ENCODE measurements at regions of chr1 and their contacts with region 1.

Region 1: GRCh38 chr1:156480411-156481192 is 20.0 kb downstream of the MEF2D start:
- DNase-seq: peak; percentile 55 to 89 (median 85)
- ATAC-seq: peak; percentile 87
- H3K4me3 ChIP-seq: no peak overlapping the region
- H3K4me3 Mint-ChIP-seq: no peak overlapping the region
- H3K27ac ChIP-seq: peak overlapping the region; percentile 22 to 52
- H3K27ac Mint-ChIP-seq: peak overlapping the region; percentile 89
- H3K4me1 ChIP-seq: peaks cover 22% of the 10 kb centered on the region
- H3K4me1 Mint-ChIP-seq: peaks cover 47% of the 10 kb centered on the region
- H3K27me3 ChIP-seq: no peaks in the 10 kb centered on the region
- H3K27me3 Mint-ChIP-seq: no peaks in the 10 kb centered on the region
- CTCF ChIP-seq: peak; percentile 79

Region 2: GRCh38 chr1:156082309-156083091 is 398.1 kb before region 1 on chr1 and contains the start of gene MEX3A:
- CTCF ChIA-PET with region 1: no interaction called
- POLR2A ChIA-PET with region 1: no interaction called
- intact Hi-C with region 1: no loop called
- DNase-seq: peak in 8 of 9 experiments; percentile 39 to 73 (median 64)
- ATAC-seq: peak; percentile 90
- H3K4me3 ChIP-seq: peak within 1 kb of the TSS; percentile 65 to 88
- H3K4me3 Mint-ChIP-seq: peak within 1 kb of the TSS; percentile 87
- H3K27ac ChIP-seq: no peak within 1 kb of the TSS
- H3K27ac Mint-ChIP-seq: no peak within 1 kb of the TSS
- H3K4me1 ChIP-seq: peaks cover 13% of the 10 kb centered on the region
- H3K4me1 Mint-ChIP-seq: peaks cover 7% of the 10 kb centered on the region
- H3K27me3 ChIP-seq: peaks cover 3 to 25% of the 10 kb centered on the region in 2 experiments
- H3K27me3 Mint-ChIP-seq: peaks cover 29% of the 10 kb centered on the region
- CTCF ChIP-seq: no peak
- total RNA-seq, gene MEX3A: 0.14 to 0.22 TPM

Region 3: GRCh38 chr1:156407344-156407743 is 73.3 kb before region 1 on chr1:
- CTCF ChIA-PET with region 1: no interaction called
- POLR2A ChIA-PET with region 1: no interaction called
- intact Hi-C with region 1: no loop called
- DNase-seq: no peak
- ATAC-seq: no peak
- H3K4me3 ChIP-seq: no peak overlapping the region
- H3K4me3 Mint-ChIP-seq: no peak overlapping the region
- H3K27ac ChIP-seq: no peak overlapping the region
- H3K27ac Mint-ChIP-seq: no peak overlapping the region
- H3K4me1 ChIP-seq: no peaks in the 10 kb centered on the region
- H3K4me1 Mint-ChIP-seq: no peaks in the 10 kb centered on the region
- H3K27me3 ChIP-seq: peaks cover 0 to 3% of the 10 kb centered on the region in 2 experiments
- H3K27me3 Mint-ChIP-seq: peaks cover 53% of the 10 kb centered on the region
- CTCF ChIP-seq: no peak

Region 4: GRCh38 chr1:156465747-156466365 is 14.7 kb before region 1 on chr1:
- CTCF ChIA-PET with region 1: interaction called, 11 read pairs
- POLR2A ChIA-PET with region 1: interaction called, 3 read pairs
- intact Hi-C with region 1: no loop called
- DNase-seq: no peak
- ATAC-seq: no peak
- H3K4me3 ChIP-seq: no peak overlapping the region
- H3K4me3 Mint-ChIP-seq: no peak overlapping the region
- H3K27ac ChIP-seq: no peak overlapping the region
- H3K27ac Mint-ChIP-seq: peak overlapping the region; percentile 28
- H3K4me1 ChIP-seq: peaks cover 6% of the 10 kb centered on the region
- H3K4me1 Mint-ChIP-seq: peaks cover 25% of the 10 kb centered on the region
- H3K27me3 ChIP-seq: no peaks in the 10 kb centered on the region
- H3K27me3 Mint-ChIP-seq: no peaks in the 10 kb centered on the region
- CTCF ChIP-seq: no peak

Region 5: GRCh38 chr1:156533568-156534215 is 53.1 kb after region 1 on chr1:
- CTCF ChIA-PET with region 1: interaction called, 37 read pairs
- POLR2A ChIA-PET with region 1: no interaction called
- intact Hi-C with region 1: no loop called
- DNase-seq: no peak
- ATAC-seq: no peak
- H3K4me3 ChIP-seq: no peak overlapping the region
- H3K4me3 Mint-ChIP-seq: no peak overlapping the region
- H3K27ac ChIP-seq: no peak overlapping the region
- H3K27ac Mint-ChIP-seq: peak overlapping the region; percentile 13
- H3K4me1 ChIP-seq: peaks cover 3% of the 10 kb centered on the region
- H3K4me1 Mint-ChIP-seq: peaks cover 3% of the 10 kb centered on the region
- H3K27me3 ChIP-seq: no peaks in the 10 kb centered on the region
- H3K27me3 Mint-ChIP-seq: no peaks in the 10 kb centered on the region
- CTCF ChIP-seq: no peak

Region 6: GRCh38 chr1:156556354-156556753 is 75.8 kb after region 1 on chr1:
- CTCF ChIA-PET with region 1: interaction called, 12 read pairs
- POLR2A ChIA-PET with region 1: no interaction called
- intact Hi-C with region 1: no loop called
- DNase-seq: no peak
- ATAC-seq: no peak
- H3K4me3 ChIP-seq: no peak overlapping the region
- H3K4me3 Mint-ChIP-seq: no peak overlapping the region
- H3K27ac ChIP-seq: no peak overlapping the region
- H3K27ac Mint-ChIP-seq: no peak overlapping the region
- H3K4me1 ChIP-seq: no peaks in the 10 kb centered on the region
- H3K4me1 Mint-ChIP-seq: peaks cover 2% of the 10 kb centered on the region
- H3K27me3 ChIP-seq: no peaks in the 10 kb centered on the region
- H3K27me3 Mint-ChIP-seq: no peaks in the 10 kb centered on the region
- CTCF ChIP-seq: no peak

Region 7: GRCh38 chr1:156591432-156592157 is 111.0 kb after region 1 on chr1 and contains the start of gene NAXE:
- CTCF ChIA-PET with region 1: interaction called, 21 read pairs
- POLR2A ChIA-PET with region 1: no interaction called
- intact Hi-C with region 1: no loop called
- DNase-seq: peak; percentile 21 to 84 (median 66)
- ATAC-seq: peak; percentile 95
- H3K4me3 ChIP-seq: peak within 1 kb of the TSS; percentile 51 to 83
- H3K4me3 Mint-ChIP-seq: peak within 1 kb of the TSS; percentile 87
- H3K27ac ChIP-seq: peak within 1 kb of the TSS; percentile 49 to 86
- H3K27ac Mint-ChIP-seq: peak within 1 kb of the TSS; percentile 91
- H3K4me1 ChIP-seq: peaks cover 18% of the 10 kb centered on the region
- H3K4me1 Mint-ChIP-seq: peaks cover 22% of the 10 kb centered on the region
- H3K27me3 ChIP-seq: no peaks in the 10 kb centered on the region
- H3K27me3 Mint-ChIP-seq: no peaks in the 10 kb centered on the region
- CTCF ChIP-seq: no peak
- total RNA-seq, gene NAXE: 18.4 TPM

Region 8: GRCh38 chr1:156608036-156608674 is 127.6 kb after region 1 on chr1:
- CTCF ChIA-PET with region 1: interaction called, 25 read pairs
- POLR2A ChIA-PET with region 1: interaction called, 3 read pairs
- intact Hi-C with region 1: loop called (anchors 1 kb)
- DNase-seq: peak; percentile 37 to 89 (median 65)
- ATAC-seq: peak; percentile 95
- H3K4me3 ChIP-seq: no peak overlapping the region
- H3K4me3 Mint-ChIP-seq: no peak overlapping the region
- H3K27ac ChIP-seq: no peak overlapping the region
- H3K27ac Mint-ChIP-seq: no peak overlapping the region
- H3K4me1 ChIP-seq: peaks cover 8% of the 10 kb centered on the region
- H3K4me1 Mint-ChIP-seq: peaks cover 11% of the 10 kb centered on the region
- H3K27me3 ChIP-seq: peaks cover 0 to 2% of the 10 kb centered on the region in 2 experiments
- H3K27me3 Mint-ChIP-seq: peaks cover 9% of the 10 kb centered on the region
- CTCF ChIP-seq: peak; percentile 88